ENCODE measurements at regions of chr15 and their contacts with region 1.

Region 1: GRCh38 chr15:57751177-57751800 is 44.8 kb downstream of the POLR2M start:
- DNase-seq: no peak
- ATAC-seq: no peak
- H3K4me3 Mint-ChIP-seq: no peak overlapping the region
- H3K27ac Mint-ChIP-seq: no peak overlapping the region
- H3K4me1 Mint-ChIP-seq: peaks cover 8% of the 10 kb centered on the region
- H3K27me3 Mint-ChIP-seq: no peaks in the 10 kb centered on the region

Region 2: DNA sequence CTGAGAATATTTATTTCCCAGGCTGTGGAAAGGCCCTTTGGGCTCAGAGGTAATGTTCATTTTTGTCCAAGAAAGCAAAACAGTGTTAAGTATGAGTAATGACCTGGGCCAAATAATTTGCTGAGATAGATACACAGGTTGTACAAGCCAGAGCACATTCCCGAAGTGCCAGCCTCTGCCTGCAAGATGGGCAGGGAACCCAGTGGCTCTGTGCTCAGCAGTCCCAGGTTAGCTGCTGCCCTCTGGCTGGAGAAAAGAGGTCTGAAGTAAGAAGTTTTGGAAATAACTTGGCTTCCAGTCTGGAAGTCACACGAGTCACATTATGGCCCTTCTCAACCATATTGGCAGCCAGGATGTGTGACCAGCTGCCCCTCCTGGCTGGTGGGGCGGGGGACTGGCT is 139.4 kb before region 1 on chr15:
- CTCF ChIA-PET with region 1: no interaction called
- POLR2A ChIA-PET with region 1: no interaction called
- DNase-seq: no peak
- ATAC-seq: no peak
- H3K4me3 Mint-ChIP-seq: no peak overlapping the region
- H3K27ac Mint-ChIP-seq: no peak overlapping the region
- H3K4me1 Mint-ChIP-seq: no peaks in the 10 kb centered on the region
- H3K27me3 Mint-ChIP-seq: no peaks in the 10 kb centered on the region

Region 3: GRCh38 chr15:57777003-57777402 is 25.7 kb after region 1 on chr15:
- CTCF ChIA-PET with region 1: interaction called, 10 read pairs
- POLR2A ChIA-PET with region 1: no interaction called
- DNase-seq: no peak
- ATAC-seq: no peak
- H3K4me3 Mint-ChIP-seq: no peak overlapping the region
- H3K27ac Mint-ChIP-seq: peak overlapping the region; percentile 35
- H3K4me1 Mint-ChIP-seq: peaks cover 23% of the 10 kb centered on the region
- H3K27me3 Mint-ChIP-seq: peaks cover 2% of the 10 kb centered on the region

Region 4: GRCh38 chr15:57835119-57835518 is 83.8 kb after region 1 on chr15:
- CTCF ChIA-PET with region 1: no interaction called
- POLR2A ChIA-PET with region 1: no interaction called
- DNase-seq: no peak
- ATAC-seq: no peak
- H3K4me3 Mint-ChIP-seq: no peak overlapping the region
- H3K27ac Mint-ChIP-seq: no peak overlapping the region
- H3K4me1 Mint-ChIP-seq: no peaks in the 10 kb centered on the region
- H3K27me3 Mint-ChIP-seq: peaks cover 17% of the 10 kb centered on the region

Region 5: DNA sequence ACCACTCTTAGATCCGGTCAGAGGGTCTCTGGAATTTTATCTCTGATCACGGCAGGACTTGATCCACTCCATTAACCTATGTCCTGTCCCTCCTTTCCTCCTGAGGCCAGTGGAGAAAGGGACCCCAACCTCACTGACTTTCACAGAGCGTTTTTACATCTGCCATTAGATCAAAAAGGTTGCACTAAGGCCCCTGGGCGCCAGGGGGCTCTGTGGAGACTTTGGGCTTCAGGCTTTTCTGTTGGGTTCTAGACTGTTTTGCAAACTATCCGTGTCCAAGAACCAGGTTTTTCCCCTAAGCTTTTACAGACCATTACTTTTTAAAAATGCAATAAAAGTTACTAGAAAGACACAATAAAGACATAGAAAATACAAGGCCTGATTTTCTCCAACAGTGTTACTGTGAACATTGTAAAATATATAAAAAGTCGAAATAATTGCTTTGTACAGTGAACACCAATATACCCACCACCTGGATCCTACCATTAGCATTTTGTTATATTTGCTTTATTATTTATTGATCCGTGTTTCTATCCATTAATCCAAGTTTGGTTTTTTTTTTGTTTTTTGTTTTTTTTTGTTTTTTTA is 115.0 kb after region 1 on chr15:
- CTCF ChIA-PET with region 1: interaction called, 210 read pairs
- POLR2A ChIA-PET with region 1: no interaction called
- DNase-seq: peak; percentile 76
- ATAC-seq: no peak
- H3K4me3 Mint-ChIP-seq: no peak overlapping the region
- H3K27ac Mint-ChIP-seq: no peak overlapping the region
- H3K4me1 Mint-ChIP-seq: peaks cover 14% of the 10 kb centered on the region
- H3K27me3 Mint-ChIP-seq: peaks cover 44% of the 10 kb centered on the region

Measured in activated CD8-positive, alpha-beta T cell treated with anti-CD3 and anti-CD28 coated beads, Interleukin-2, amount 10 ng/mL, durations not matched to agents 7 days and 5 days (primary cell).